ENCODE measurements at regions of chr15 and their contacts with region 1.

Region 1: GRCh38 chr15:38690689-38691332 is 126.2 kb upstream of the RASGRP1 start:
- DNase-seq: peak; percentile 49
- CTCF ChIP-seq: peak; percentile 77

Region 2: GRCh38 chr15:38424101-38424552 is 266.7 kb before region 1 on chr15:
- CTCF ChIA-PET with region 1: interaction called, 13 read pairs
- POLR2A ChIA-PET with region 1: no interaction called
- DNase-seq: no peak
- CTCF ChIP-seq: no peak

Region 3: DNA sequence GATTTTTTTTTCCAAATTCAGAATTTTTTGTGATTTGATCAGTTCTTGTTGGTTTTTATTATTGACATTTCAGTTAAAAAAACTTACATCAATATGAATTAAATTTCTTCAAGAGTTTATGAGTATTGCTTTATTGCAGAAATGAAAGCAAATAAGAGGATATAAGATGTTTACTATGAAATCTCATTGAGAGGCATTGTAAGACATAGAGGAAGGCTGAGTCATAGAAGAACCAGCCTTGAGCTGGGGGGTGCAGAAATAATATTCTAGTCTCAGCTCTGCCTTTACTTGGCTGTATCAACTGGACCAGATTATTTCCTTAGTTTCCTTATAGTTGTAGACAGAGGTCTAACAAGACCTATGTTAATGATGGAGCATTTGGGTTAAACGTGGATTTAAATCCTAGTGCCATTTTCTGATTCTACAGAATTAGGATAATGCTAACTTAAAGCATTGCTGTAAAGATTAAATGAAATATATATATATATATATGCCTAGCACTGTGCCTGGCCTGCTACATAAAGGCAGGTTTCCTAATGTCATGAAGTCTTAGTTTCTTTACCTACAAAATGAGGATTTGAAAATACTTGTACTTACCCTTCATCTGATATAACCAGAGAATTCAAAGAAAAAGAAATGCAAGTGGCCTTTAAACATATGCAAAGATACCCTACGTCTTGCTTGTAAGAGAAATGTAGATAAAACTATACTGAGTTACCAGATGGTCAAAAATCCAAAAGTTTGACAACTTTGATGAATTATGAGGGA is 229.6 kb before region 1 on chr15:
- CTCF ChIA-PET with region 1: interaction called, 13 read pairs
- POLR2A ChIA-PET with region 1: no interaction called
- DNase-seq: peak; percentile 44
- CTCF ChIP-seq: no peak

Region 4: GRCh38 chr15:38521316-38521715 is 169.5 kb before region 1 on chr15:
- CTCF ChIA-PET with region 1: interaction called, 14 read pairs
- POLR2A ChIA-PET with region 1: no interaction called
- DNase-seq: no peak
- CTCF ChIP-seq: no peak

Region 5: GRCh38 chr15:38624244-38625205 is 66.3 kb before region 1 on chr15:
- CTCF ChIA-PET with region 1: interaction called, 18 read pairs
- POLR2A ChIA-PET with region 1: no interaction called
- DNase-seq: no peak
- CTCF ChIP-seq: no peak

Region 6: DNA sequence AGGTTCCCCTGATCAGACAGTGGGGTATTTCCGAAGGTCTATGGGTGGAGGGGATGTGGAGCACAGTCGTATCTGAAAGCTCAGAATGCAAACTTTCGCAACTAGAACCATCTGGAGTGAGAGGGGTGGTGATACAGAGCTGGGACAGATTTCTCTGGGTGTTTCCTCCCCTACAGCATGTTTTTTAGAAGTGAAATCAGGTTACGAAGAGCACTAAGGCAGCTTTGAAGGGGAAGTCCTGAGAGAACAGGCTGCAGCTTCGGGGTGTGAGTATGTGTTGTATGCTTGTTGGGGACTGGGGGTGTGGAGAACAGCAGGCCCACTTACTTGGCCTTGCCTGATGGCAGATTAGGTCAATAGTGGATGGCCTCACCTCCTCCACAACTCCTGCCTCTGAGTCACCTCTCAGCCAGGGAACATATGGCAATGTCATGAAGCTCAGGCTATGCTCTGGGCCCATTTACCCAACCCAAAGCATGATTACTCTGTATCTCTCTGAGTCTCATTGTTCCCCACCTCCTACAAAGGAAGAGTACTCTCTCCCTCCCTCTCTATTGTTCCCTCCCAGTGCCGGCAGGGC is 19.0 kb before region 1 on chr15:
- CTCF ChIA-PET with region 1: interaction called, 122 read pairs
- POLR2A ChIA-PET with region 1: interaction called, 4 read pairs
- DNase-seq: no peak
- CTCF ChIP-seq: peak; percentile 0